ENCODE measurements at regions of chr1 and their contacts with region 1.

Region 1: DNA sequence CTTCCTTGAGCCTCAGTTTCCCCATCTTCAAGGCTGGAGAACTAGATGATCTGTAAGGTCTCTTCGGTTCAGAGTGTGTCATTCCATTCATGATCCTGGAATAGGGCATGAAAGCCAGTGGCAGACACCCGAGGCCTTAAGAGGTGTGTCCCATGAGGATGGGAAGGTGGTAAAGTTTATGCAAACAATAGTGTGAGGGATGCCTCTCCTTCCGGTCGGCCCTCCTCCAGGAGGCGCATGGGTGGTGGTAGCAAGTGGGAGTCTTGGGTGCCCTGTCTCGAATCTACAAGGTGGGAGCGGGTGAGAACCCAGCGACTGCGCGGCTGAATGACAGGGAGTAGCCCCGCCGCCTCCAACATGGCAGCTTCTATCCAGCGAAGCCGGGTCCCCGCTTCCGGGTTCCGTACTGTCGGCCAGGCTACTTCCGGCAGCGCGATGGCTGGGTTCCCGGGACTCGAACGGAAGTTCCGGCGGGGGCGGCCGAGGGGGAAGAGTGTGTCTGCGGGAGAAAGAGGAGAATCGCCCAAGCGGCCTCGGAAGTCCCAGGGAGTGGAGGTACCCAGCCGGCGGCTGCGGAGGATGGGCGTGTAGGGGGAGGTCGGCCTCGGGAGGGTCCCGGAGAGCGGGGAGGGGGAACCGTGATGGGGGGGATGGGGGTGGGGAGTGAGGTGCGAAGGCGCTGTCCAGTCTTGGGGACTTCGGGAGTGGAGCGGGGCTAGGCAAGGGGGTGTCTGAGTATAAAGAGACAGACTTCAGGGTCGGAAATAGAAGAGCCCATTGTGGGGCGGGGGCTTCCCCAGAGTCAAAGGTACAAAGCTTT is at the start of gene LYPLA2:
- DNase-seq: peak; percentile 88
- H3K4me3 ChIP-seq: peak within 1 kb of the TSS; percentile 84
- H3K4me3 Mint-ChIP-seq: peak within 1 kb of the TSS; percentile 93
- H3K27ac Mint-ChIP-seq: peak within 1 kb of the TSS; percentile 91
- H3K4me1 ChIP-seq: peaks cover 9% of the 10 kb centered on the region
- H3K4me1 Mint-ChIP-seq: no peaks in the 10 kb centered on the region
- H3K27me3 ChIP-seq: no peaks in the 10 kb centered on the region
- H3K27me3 Mint-ChIP-seq: no peaks in the 10 kb centered on the region
- CTCF ChIP-seq: no peak
- total RNA-seq, gene LYPLA2: 52.5 and 63.1 TPM in 2 replicates

Region 2: DNA sequence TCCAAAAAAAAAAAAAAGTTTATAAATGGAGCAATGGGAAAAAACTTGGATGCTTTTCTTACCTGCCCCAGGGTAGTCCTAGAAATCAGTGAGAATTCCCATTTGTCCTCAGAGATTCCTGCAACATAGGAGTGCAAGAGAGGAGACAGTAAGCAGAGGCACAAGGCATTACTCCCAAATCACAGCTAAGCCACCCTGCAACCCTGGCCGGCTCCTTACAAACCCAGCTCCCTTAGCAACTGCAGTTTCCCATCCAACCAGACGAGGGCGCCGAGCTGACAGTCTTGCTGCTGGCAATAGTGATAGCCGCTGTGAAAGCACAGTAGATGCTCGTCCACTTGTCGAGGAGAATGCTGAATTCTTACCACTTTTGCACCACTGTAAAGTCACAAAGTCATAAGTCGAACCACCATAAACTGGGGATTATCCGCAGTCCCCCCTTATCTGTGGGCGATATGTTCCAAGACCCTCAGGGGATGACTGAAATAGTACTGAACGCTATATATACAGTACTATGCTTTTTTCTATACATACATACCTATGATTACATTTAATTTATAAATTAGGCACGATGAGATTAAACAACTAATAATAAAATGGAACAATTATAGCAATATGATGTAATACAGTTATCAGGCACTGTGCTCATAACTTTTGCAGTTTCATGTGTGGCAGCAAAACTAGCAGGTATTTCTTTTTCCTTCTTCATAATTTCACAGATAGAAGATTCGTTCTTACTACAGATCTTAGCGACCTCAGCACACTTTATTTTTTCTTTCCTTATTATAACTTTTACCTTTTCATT is 18.7 kb before region 1 on chr1:
- CTCF ChIA-PET with region 1: interaction called, 21 read pairs
- POLR2A ChIA-PET with region 1: no interaction called
- intact Hi-C with region 1: no loop called
- DNase-seq: peak; percentile 81 to 82
- H3K4me3 ChIP-seq: no peak overlapping the region
- H3K4me3 Mint-ChIP-seq: no peak overlapping the region
- H3K27ac Mint-ChIP-seq: no peak overlapping the region
- H3K4me1 ChIP-seq: no peaks in the 10 kb centered on the region
- H3K4me1 Mint-ChIP-seq: no peaks in the 10 kb centered on the region
- H3K27me3 ChIP-seq: no peaks in the 10 kb centered on the region
- H3K27me3 Mint-ChIP-seq: no peaks in the 10 kb centered on the region
- CTCF ChIP-seq: peak; percentile 76 to 87